ENCODE measurements at regions of chr1 and their contacts with region 1.

Region 1: GRCh38 chr1:167442124-167442848 is 76.0 kb downstream of the CD247 start:
- DNase-seq: peak; percentile 92
- H3K4me3 ChIP-seq: 0 out of 2 replicates have a peak overlapping the region, but pooled peaks have one; percentile 3
- H3K27ac ChIP-seq: peak overlapping the region; percentile 52
- H3K4me1 ChIP-seq: peaks cover 21% of the 10 kb centered on the region
- H3K27me3 ChIP-seq: no peaks in the 10 kb centered on the region
- CTCF ChIP-seq: peak; percentile 91

Region 2: GRCh38 chr1:167270349-167271092 is 171.8 kb before region 1 on chr1:
- CTCF ChIA-PET with region 1: interaction called, 5 read pairs
- POLR2A ChIA-PET with region 1: no interaction called
- intact Hi-C with region 1: loop called (anchors 1 kb)
- DNase-seq: no peak
- H3K4me3 ChIP-seq: no peak overlapping the region
- H3K27ac ChIP-seq: no peak overlapping the region
- H3K4me1 ChIP-seq: no peaks in the 10 kb centered on the region
- H3K27me3 ChIP-seq: no peaks in the 10 kb centered on the region
- CTCF ChIP-seq: no peak

Region 3: GRCh38 chr1:167533851-167534300 is 91.6 kb after region 1 on chr1:
- CTCF ChIA-PET with region 1: interaction called, 6 read pairs
- POLR2A ChIA-PET with region 1: no interaction called
- intact Hi-C with region 1: loop called (anchors 2 kb)
- DNase-seq: peak; percentile 52 to 67
- H3K4me3 ChIP-seq: no peak overlapping the region
- H3K27ac ChIP-seq: no peak overlapping the region
- H3K4me1 ChIP-seq: no peaks in the 10 kb centered on the region
- H3K27me3 ChIP-seq: no peaks in the 10 kb centered on the region
- CTCF ChIP-seq: peak; percentile 91